ENCODE measurements at regions of chrX and their contacts with region 1.

Region 1: GRCh38 chrX:45515262-45516215 is 314.9 kb upstream of the DIPK2B start:
- DNase-seq: peak; percentile 98
- H3K4me3 ChIP-seq: no peak overlapping the region
- H3K27ac ChIP-seq: peak overlapping the region; percentile 93
- H3K4me1 ChIP-seq: peaks cover 33% of the 10 kb centered on the region
- H3K27me3 ChIP-seq: no peaks in the 10 kb centered on the region
- CTCF ChIP-seq: peak; percentile 71 to 84

Region 2: GRCh38 chrX:44400588-44400987 is 1115.0 kb before region 1 on chrX:
- CTCF ChIA-PET with region 1: no interaction called
- dilution Hi-C with region 1: no loop called
- in situ Hi-C with region 1: no loop called
- intact Hi-C with region 1: no loop called
- DNase-seq: peak; percentile 95
- H3K4me3 ChIP-seq: no peak overlapping the region
- H3K27ac ChIP-seq: no peak overlapping the region
- H3K4me1 ChIP-seq: peaks cover 10% of the 10 kb centered on the region
- H3K27me3 ChIP-seq: no peaks in the 10 kb centered on the region
- CTCF ChIP-seq: no peak

Region 3: GRCh38 chrX:44529310-44529709 is 986.2 kb before region 1 on chrX:
- CTCF ChIA-PET with region 1: no interaction called
- dilution Hi-C with region 1: no loop called
- in situ Hi-C with region 1: no loop called
- intact Hi-C with region 1: no loop called
- DNase-seq: no peak
- H3K4me3 ChIP-seq: no peak overlapping the region
- H3K27ac ChIP-seq: no peak overlapping the region
- H3K4me1 ChIP-seq: no peaks in the 10 kb centered on the region
- H3K27me3 ChIP-seq: no peaks in the 10 kb centered on the region
- CTCF ChIP-seq: no peak

Region 4: DNA sequence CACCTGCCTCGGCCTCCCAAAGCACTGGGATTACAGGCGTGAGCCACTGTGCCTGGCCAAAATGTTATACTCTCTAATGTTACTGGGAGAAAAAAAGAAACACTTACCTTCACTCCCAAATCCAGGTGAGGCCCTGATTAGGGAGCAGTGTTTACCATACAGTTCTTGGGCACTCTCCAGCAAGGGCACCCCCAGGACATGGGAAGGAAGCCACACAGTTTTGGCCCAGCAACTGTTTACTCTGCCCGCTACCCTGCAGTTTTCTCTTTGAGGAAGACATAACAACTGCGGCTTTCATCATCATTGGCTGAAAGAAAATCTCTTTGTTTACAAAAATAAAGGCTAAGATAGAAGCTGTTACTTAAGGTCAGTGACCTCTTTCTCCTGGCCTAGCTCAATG is 817.2 kb before region 1 on chrX:
- CTCF ChIA-PET with region 1: no interaction called
- dilution Hi-C with region 1: no loop called
- in situ Hi-C with region 1: no loop called
- intact Hi-C with region 1: no loop called
- DNase-seq: no peak
- H3K4me3 ChIP-seq: no peak overlapping the region
- H3K27ac ChIP-seq: no peak overlapping the region
- H3K4me1 ChIP-seq: no peaks in the 10 kb centered on the region
- H3K27me3 ChIP-seq: peaks cover 6% of the 10 kb centered on the region
- CTCF ChIP-seq: no peak

Region 5: DNA sequence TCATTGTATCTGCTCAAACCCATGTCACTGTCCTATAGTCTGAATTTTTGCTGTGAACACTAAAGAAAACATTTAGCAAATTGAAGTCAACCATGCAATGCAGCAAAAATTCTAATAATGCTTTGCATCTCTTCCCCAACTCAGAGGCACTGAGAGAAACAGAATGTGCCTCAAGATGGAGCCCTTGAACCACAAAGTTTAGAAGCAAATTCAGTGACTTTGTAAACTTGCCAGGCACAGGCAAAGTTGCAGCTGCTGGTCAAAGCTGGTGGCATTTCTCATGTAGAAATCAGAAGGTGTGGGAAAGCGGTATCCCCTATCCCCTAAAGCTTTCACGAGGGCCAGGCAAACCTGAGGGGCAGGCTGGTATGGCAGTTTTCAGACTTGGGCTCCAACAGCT is 193.2 kb before region 1 on chrX:
- CTCF ChIA-PET with region 1: no interaction called
- dilution Hi-C with region 1: no loop called
- in situ Hi-C with region 1: loop called in 1 of 2 experiments (anchors 10 kb)
- intact Hi-C with region 1: loop called (anchors 1 kb)
- DNase-seq: peak; percentile 74
- H3K4me3 ChIP-seq: no peak overlapping the region
- H3K27ac ChIP-seq: peak overlapping the region; percentile 43
- H3K4me1 ChIP-seq: peaks cover 14% of the 10 kb centered on the region
- H3K27me3 ChIP-seq: no peaks in the 10 kb centered on the region
- CTCF ChIP-seq: peak; percentile 66 to 74

Region 6: DNA sequence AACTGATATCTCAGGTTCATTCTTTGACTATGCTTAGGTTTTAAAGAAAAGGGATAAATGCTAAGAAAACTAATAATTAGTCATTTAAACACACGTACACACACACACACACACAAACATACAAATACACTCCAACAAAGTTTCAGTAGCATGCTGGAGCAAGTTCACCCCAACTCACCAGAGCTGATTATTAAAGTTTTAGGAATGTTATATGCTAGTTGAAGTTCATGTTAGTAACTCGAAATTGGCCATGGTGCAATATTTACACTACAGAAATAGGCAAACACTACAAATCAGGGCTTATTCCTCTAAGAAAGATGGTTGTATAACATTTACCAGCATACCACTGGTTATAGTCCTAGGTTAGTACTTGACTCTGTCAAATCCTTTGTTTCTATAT is 69.2 kb after region 1 on chrX:
- CTCF ChIA-PET with region 1: no interaction called
- dilution Hi-C with region 1: no loop called
- in situ Hi-C with region 1: no loop called
- intact Hi-C with region 1: loop called (anchors 2 kb)
- DNase-seq: peak; percentile 84
- H3K4me3 ChIP-seq: no peak overlapping the region
- H3K27ac ChIP-seq: peak overlapping the region; percentile 44
- H3K4me1 ChIP-seq: peaks cover 11% of the 10 kb centered on the region
- H3K27me3 ChIP-seq: no peaks in the 10 kb centered on the region
- CTCF ChIP-seq: no peak

Region 7: DNA sequence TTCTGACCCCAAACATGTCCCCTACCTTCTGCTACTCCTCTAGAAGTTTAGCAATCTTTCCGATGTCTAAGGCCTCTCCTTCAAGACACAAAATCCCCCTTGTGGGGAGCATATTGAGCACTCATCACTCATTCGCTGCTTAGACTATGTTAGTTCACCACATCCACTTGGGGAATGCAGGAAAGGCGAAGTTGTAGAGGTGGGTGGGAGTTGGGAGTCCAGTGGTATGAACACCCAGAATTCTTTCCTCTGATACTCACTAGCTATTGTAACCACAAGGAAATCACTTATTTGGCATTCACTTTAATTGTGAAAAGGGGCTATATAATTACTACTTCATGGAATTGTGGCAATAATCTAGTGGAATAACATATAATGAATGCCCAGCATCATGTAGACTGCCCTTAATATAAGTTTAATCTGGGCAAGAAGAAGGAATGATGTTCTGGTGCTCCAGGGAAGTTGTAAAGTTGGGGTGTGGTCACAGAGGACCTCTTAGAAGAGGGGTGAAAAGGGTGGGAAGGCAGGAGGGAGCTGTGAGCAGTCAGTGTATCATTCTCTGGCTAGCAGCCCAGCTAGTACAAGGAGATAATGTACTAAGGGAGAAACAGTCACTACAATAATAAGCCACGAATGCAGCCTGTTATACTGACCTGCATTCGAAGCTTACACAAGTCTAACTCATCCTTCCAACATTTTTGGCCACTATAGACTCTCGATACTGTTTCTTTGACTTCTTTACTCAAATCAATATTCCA is 153.3 kb after region 1 on chrX:
- CTCF ChIA-PET with region 1: no interaction called
- dilution Hi-C with region 1: no loop called
- in situ Hi-C with region 1: no loop called
- intact Hi-C with region 1: loop called (anchors 1 kb)
- DNase-seq: peak; percentile 94
- H3K4me3 ChIP-seq: no peak overlapping the region
- H3K27ac ChIP-seq: peak overlapping the region; percentile 39
- H3K4me1 ChIP-seq: peaks cover 26% of the 10 kb centered on the region
- H3K27me3 ChIP-seq: no peaks in the 10 kb centered on the region
- CTCF ChIP-seq: no peak

Region 8: DNA sequence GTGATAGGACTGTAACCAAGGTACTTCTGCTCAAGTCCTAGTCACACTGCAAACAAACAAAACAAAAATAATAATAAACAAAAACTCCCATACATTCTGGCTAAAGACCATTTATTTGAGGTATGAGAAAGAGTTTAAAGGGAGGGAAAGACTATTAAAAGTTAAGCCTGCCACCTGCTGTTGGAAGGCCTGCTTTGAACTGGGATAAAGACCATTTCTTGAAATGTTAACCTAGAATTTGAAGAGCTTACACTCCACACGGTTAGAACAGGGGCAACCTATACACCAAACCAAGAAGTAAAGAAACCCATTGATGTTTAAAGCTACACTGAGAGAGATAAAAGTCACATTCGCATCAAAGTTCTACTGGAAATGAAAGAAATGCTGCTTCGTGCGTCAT is 233.8 kb after region 1 on chrX:
- CTCF ChIA-PET with region 1: interaction called, 11 read pairs
- dilution Hi-C with region 1: no loop called
- in situ Hi-C with region 1: loop called (anchors 10 kb)
- intact Hi-C with region 1: loop called (anchors 1 kb)
- DNase-seq: no peak
- H3K4me3 ChIP-seq: no peak overlapping the region
- H3K27ac ChIP-seq: peak overlapping the region; percentile 86
- H3K4me1 ChIP-seq: peaks cover 92% of the 10 kb centered on the region
- H3K27me3 ChIP-seq: no peaks in the 10 kb centered on the region
- CTCF ChIP-seq: peak; percentile 40 to 56

Region 9: DNA sequence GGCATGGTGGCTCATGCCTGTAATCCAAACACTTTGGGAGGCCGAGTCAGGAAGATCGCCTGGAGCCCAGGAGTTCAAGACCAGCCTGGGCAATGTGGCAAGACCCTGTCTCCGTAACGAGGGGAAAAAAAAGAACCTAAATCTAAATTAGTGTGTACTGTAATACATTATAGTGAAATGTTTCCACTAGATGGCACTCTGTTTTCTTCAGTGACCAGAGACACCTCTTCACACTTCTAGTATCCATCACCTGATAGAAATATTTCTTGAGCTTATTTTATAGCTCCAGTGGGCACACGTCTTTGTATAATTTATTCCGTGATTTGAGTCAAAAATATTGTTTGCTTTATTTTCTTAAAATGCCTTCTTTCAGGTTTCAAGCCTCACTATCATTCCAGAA is 286.0 kb after region 1 on chrX:
- CTCF ChIA-PET with region 1: interaction called, 4 read pairs
- dilution Hi-C with region 1: no loop called
- in situ Hi-C with region 1: no loop called
- intact Hi-C with region 1: loop called (anchors 1 kb)
- DNase-seq: peak; percentile 50
- H3K4me3 ChIP-seq: peak overlapping the region in 1 of 3 experiments; percentile 40
- H3K27ac ChIP-seq: peak overlapping the region; percentile 91
- H3K4me1 ChIP-seq: peaks cover 48% of the 10 kb centered on the region
- H3K27me3 ChIP-seq: no peaks in the 10 kb centered on the region
- CTCF ChIP-seq: peak; percentile 39 to 52

Region 10: DNA sequence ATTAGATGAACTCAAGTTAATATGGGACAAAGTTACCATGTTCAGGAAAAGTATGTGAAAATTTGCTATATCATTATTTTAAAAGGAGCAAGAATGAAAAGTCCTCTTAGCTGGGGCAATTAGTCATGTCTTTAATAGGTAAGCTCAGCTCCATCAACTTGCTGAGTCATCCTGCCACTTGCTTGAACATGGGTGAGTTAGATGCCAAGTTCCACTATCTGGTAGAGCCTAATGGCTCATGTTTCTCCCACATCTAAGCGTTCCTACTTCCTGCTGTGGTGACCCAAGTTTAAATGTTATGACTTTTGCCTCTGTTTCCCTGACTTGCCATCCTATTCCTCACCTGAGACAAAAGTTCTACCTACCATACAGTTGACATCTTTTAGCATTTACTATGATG is 752.9 kb after region 1 on chrX:
- CTCF ChIA-PET with region 1: no interaction called
- dilution Hi-C with region 1: no loop called
- in situ Hi-C with region 1: no loop called
- intact Hi-C with region 1: loop called (anchors 10 kb)
- DNase-seq: peak; percentile 85
- H3K4me3 ChIP-seq: no peak overlapping the region
- H3K27ac ChIP-seq: peak overlapping the region; percentile 47
- H3K4me1 ChIP-seq: peaks cover 26% of the 10 kb centered on the region
- H3K27me3 ChIP-seq: no peaks in the 10 kb centered on the region
- CTCF ChIP-seq: no peak

Measured in mammary epithelial cell (primary cell).